Activated T-helper 2 cell treated with anti-CD3 and anti-CD28 coated beads, Interferon-gamma antibody, Interleukin-2, Interleukin-4, amounts not matched to agents 10 μg/mL and 5 μg/mL and 100 μg/mL, durations not matched to agents 14 hours and 24 hours and 36 hours (primary cell): ENCODE measurements at regions of chr7 and their contacts with region 1.

Region 1: DNA sequence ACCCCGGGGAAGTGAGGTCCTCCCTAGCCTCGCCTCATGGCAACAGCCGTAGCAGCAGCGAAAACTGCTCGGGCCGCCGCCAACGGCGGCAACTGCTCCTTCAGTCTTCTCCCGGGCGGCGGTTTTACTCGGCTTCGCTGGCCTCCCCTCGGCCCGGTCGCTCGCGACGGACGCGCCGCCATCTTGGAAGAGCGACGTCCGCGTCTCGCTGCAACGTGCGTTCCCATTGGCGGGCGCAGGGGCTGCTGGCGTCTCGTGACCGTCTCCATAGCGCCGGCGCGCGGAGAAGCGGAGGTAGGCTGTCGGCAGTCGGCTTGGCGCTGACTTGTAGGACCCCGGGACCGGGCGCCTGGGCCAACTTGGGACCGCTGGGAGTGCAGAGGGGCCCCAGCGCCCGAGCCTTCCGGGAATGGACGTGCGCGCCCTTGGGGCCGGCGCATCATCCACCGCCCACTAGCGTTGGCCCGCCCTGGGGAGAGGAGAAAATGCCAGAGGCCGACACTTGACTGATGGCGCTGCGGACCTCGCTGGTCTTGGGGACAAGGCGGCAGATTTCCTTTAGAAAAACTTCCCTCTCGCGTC is at the start of gene SNX13:
- DNase-seq: peak; percentile 84
- H3K4me3 Mint-ChIP-seq: peak within 1 kb of the TSS; percentile 97
- H3K27ac Mint-ChIP-seq: peak within 1 kb of the TSS; percentile 94
- H3K4me1 Mint-ChIP-seq: peaks cover 36% of the 10 kb centered on the region
- H3K27me3 Mint-ChIP-seq: peaks cover 10% of the 10 kb centered on the region
- total RNA-seq, gene SNX13: 21.2 and 21.9 TPM in 2 replicates

Region 2: DNA sequence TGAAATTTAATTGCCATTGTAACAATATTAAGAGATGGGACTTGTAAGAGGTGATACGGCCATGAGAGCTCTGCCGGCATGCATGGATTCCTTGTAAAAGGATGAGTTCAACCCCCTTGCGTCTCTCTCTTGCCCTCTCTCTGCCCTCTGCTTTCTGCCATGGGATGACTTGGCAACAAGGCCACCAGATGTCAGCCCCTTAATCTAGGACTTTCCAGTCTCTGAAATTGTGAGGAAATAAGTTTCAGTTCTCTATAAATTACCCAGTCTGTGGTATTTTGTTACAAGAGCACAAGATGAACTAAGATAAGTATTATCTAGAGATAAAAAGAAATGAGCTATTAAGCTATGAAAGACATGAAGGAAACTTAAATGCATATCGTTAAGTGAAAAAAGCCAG is 787.7 kb before region 1 on chr7:
- intact Hi-C with region 1: loop called (anchors 10 kb)
- DNase-seq: no peak
- H3K4me3 Mint-ChIP-seq: no peak overlapping the region
- H3K27ac Mint-ChIP-seq: peak overlapping the region; percentile 31
- H3K4me1 Mint-ChIP-seq: peaks cover 52% of the 10 kb centered on the region
- H3K27me3 Mint-ChIP-seq: no peaks in the 10 kb centered on the region

Region 3: DNA sequence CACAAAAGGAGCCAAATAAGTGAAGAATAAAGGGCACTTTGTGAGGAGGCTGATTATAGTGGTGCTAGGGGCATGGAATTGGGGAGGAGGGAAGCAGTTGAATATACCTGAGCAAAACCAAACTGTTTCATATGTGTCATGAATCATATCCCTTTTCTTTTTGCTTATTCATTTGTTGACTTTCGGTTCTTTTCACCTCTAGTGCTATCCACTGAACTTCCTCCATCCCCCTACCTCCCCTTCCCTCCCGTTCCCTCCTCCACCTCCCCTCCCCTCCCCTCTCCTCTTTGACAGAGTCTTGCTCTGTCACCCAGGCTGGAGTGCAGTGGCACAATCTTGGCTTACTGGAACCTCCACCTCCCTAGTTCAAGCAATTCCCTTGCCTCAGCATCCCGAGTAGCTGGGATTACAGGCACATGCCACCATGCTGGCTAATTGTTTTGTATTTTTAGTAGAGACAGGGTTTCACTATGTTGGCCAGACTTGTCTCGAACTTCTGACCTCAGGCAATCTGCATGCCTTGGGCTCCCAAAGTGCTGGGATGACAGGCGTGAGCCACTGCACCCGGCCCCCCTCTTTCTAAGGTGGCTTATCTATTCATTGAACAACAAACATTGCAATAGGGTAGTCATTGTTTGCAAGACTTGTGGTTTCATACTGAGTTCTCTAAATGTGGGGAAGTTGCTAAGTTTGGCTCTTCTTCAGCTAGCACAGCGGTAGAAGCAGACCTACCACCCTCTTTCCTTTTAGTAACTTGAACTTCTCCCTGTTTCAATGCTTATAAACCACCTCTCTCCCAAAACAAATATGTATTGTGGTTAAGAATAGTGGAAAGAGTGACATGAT is 237.6 kb after region 1 on chr7:
- intact Hi-C with region 1: loop called (anchors 10 kb)
- DNase-seq: peak; percentile 10
- H3K4me3 Mint-ChIP-seq: peak overlapping the region; percentile 13
- H3K27ac Mint-ChIP-seq: no peak overlapping the region
- H3K4me1 Mint-ChIP-seq: peaks cover 17% of the 10 kb centered on the region
- H3K27me3 Mint-ChIP-seq: peaks cover 8% of the 10 kb centered on the region